Right lobe of liver (tissue), 6 donors: ENCODE measurements at regions of chr7 and their contacts with region 1.

Region 1: GRCh38 chr7:128387216-128388144 is 22.3 kb downstream of the IMPDH1 start:
- DNase-seq: peak; percentile 73 to 77 (median 76)
- ATAC-seq: peak; percentile 89 to 96 (median 92)
- H3K4me3 ChIP-seq: no peak overlapping the region
- H3K27ac ChIP-seq: no peak overlapping the region
- H3K4me1 ChIP-seq: no peaks in the 10 kb centered on the region
- H3K27me3 ChIP-seq: no peaks in the 10 kb centered on the region
- CTCF ChIP-seq: peak; percentile 67 to 87 (median 80)
- POLR2A ChIP-seq: no peak

Region 2: DNA sequence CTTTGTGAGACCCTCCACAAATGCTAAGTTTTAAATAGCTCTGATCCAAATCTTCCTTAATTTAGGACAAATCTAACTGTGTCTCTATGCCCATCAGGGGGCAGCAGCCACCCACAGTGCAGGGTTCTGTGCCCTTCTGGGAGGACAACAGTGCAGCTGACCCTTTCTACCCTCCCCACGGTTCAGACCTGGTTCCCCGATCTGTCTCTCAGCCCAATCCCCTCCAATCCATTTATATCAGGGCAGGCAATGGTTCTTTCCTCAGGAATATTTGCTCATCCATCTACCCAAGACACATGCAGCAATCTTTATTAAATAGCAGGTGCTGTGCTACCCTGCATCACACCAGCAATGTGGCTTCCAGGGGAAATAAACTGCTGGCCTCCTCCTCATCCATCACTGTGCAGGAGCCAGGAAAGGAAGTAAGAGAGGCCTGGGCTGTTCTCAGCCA is 39.8 kb before region 1 on chr7:
- intact Hi-C with region 1: loop called (anchors 5 kb)
- DNase-seq: peak in 1 of 3 donors; percentile 54
- ATAC-seq: peak; percentile 31 to 55 (median 48)
- H3K4me3 ChIP-seq: no peak overlapping the region
- H3K27ac ChIP-seq: no peak overlapping the region
- H3K4me1 ChIP-seq: peaks cover 0 to 16% (median 2%) of the 10 kb centered on the region in 4 donors
- H3K27me3 ChIP-seq: peaks cover 0 to 9% of the 10 kb centered on the region in 2 donors
- CTCF ChIP-seq: peak; percentile 63 to 73 (median 68)
- POLR2A ChIP-seq: no peak